Activated CD4-positive, alpha-beta T cell treated with anti-CD3 and anti-CD28 coated beads for 36 hours (primary cell): ENCODE measurements at regions of chr3 and their contacts with region 1.

Region 1: GRCh38 chr3:114632757-114633424 is 339.1 kb downstream of the TIGIT start:
- DNase-seq: peak; percentile 63
- ATAC-seq: peak; percentile 93
- H3K4me3 Mint-ChIP-seq: no peak overlapping the region
- H3K27ac Mint-ChIP-seq: peak overlapping the region; percentile 27
- H3K4me1 Mint-ChIP-seq: peaks cover 19% of the 10 kb centered on the region
- H3K27me3 Mint-ChIP-seq: no peaks in the 10 kb centered on the region

Region 2: GRCh38 chr3:114504941-114505632 is 127.8 kb before region 1 on chr3:
- CTCF ChIA-PET with region 1: no interaction called
- POLR2A ChIA-PET with region 1: no interaction called
- intact Hi-C with region 1: loop called in 1 of 2 experiments (anchors 1 kb)
- DNase-seq: no peak
- ATAC-seq: peak; percentile 94
- H3K4me3 Mint-ChIP-seq: no peak overlapping the region
- H3K27ac Mint-ChIP-seq: no peak overlapping the region
- H3K4me1 Mint-ChIP-seq: peaks cover 40% of the 10 kb centered on the region
- H3K27me3 Mint-ChIP-seq: peaks cover 19% of the 10 kb centered on the region

Region 3: GRCh38 chr3:114590309-114591047 is 42.4 kb before region 1 on chr3:
- CTCF ChIA-PET with region 1: no interaction called
- POLR2A ChIA-PET with region 1: no interaction called
- intact Hi-C with region 1: loop called (anchors 2 to 5 kb)
- DNase-seq: peak; percentile 7
- ATAC-seq: peak; percentile 83
- H3K4me3 Mint-ChIP-seq: no peak overlapping the region
- H3K27ac Mint-ChIP-seq: no peak overlapping the region
- H3K4me1 Mint-ChIP-seq: peaks cover 7% of the 10 kb centered on the region
- H3K27me3 Mint-ChIP-seq: no peaks in the 10 kb centered on the region